ENCODE measurements at regions of chr4 and their contacts with region 1.

Region 1: GRCh38 chr4:72468904-72469502 is 100.0 kb downstream of the ADAMTS3 start:
- DNase-seq: no peak
- H3K4me3 ChIP-seq: no peak overlapping the region
- H3K27ac ChIP-seq: no peak overlapping the region
- H3K4me1 ChIP-seq: no peaks in the 10 kb centered on the region
- H3K27me3 ChIP-seq: no peaks in the 10 kb centered on the region
- CTCF ChIP-seq: peak; percentile 16 to 62 (median 32)

Region 2: DNA sequence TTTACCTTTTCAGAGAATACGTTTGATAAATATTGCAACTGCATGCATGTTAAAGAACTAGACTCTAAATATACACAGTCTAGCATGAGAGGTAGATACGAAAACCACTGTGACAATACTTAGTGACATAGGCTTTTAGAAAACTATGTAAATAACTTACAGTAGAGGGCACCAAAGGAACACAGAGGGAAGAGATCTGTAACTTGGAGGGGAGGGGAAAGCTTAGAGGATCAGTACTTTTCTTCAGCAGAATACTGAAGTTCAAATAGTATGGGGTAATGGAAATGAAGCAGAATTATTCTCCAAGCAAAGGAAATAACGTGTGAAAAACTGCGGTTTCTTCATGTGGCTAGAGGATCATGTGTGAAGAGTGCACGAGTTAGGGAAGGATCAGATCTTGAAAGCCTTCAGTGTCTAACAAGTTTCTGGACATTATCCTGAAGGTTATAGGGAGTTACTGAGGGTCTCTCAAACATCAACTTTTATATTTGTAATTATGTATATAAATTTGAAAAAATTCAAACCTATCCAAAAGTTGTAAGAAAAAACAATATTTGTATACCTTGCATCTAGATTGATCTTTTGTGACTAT is 172.9 kb before region 1 on chr4:
- intact Hi-C with region 1: loop called (anchors 5 kb)
- DNase-seq: no peak
- H3K4me3 ChIP-seq: no peak overlapping the region
- H3K27ac ChIP-seq: no peak overlapping the region
- H3K4me1 ChIP-seq: no peaks in the 10 kb centered on the region
- H3K27me3 ChIP-seq: no peaks in the 10 kb centered on the region
- CTCF ChIP-seq: peak in 2 of 3 experiments; percentile 69 to 76

Region 3: DNA sequence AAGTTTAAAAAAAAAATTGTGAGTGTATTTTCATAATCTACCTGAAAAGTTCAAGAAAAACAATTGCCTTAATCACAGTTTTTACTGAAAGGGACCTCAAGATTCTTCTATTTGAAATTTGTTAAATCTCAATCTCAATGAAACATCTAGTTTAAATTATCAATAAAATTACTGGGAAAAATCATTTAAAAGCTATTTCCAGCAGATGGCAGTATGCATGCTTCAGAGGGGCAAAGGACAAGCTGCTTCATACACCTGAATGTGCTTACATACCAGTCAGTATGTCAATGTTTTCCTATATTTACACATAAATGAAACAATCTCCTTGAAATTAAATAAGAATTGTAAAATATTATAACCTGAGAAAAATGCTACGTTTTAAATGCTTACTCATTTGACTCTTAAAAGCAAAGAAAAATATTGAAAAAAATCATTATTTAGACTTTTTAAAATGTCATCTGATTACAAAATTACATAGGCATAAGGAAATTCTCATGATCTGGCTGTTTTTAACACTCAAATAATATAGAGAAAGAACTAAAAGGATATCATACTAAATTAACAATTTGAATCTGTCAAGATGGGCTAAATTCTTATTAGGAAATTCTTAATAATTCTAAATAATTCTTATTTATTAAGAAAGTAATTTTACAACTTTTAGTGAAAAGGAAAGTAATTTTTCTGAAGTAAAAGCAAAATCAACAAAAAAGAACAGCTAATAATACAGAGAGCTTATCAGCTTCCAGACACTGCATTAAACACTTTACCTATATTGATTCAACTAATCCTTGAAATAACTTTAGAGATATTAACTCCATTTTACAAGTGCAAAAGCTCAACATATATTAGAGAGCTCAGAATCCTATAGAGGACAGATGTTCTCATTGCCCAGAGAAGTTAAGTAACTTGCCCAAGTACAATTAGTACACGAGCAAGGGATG is 142.0 kb before region 1 on chr4:
- intact Hi-C with region 1: loop called (anchors 2 kb)
- DNase-seq: no peak
- H3K4me3 ChIP-seq: no peak overlapping the region
- H3K27ac ChIP-seq: no peak overlapping the region
- H3K4me1 ChIP-seq: no peaks in the 10 kb centered on the region
- H3K27me3 ChIP-seq: no peaks in the 10 kb centered on the region
- CTCF ChIP-seq: peak in 2 of 3 experiments; percentile 48 to 71

Region 4: GRCh38 chr4:72761368-72762038 is 292.5 kb after region 1 on chr4:
- intact Hi-C with region 1: no loop called
- DNase-seq: no peak
- H3K4me3 ChIP-seq: no peak overlapping the region
- H3K27ac ChIP-seq: no peak overlapping the region
- H3K4me1 ChIP-seq: no peaks in the 10 kb centered on the region
- H3K27me3 ChIP-seq: no peaks in the 10 kb centered on the region
- CTCF ChIP-seq: no peak

Measured in ascending aorta (tissue), 2 donors.